A549 (cell line): ENCODE measurements at regions of chr1 and their contacts with region 1.

Region 1: DNA sequence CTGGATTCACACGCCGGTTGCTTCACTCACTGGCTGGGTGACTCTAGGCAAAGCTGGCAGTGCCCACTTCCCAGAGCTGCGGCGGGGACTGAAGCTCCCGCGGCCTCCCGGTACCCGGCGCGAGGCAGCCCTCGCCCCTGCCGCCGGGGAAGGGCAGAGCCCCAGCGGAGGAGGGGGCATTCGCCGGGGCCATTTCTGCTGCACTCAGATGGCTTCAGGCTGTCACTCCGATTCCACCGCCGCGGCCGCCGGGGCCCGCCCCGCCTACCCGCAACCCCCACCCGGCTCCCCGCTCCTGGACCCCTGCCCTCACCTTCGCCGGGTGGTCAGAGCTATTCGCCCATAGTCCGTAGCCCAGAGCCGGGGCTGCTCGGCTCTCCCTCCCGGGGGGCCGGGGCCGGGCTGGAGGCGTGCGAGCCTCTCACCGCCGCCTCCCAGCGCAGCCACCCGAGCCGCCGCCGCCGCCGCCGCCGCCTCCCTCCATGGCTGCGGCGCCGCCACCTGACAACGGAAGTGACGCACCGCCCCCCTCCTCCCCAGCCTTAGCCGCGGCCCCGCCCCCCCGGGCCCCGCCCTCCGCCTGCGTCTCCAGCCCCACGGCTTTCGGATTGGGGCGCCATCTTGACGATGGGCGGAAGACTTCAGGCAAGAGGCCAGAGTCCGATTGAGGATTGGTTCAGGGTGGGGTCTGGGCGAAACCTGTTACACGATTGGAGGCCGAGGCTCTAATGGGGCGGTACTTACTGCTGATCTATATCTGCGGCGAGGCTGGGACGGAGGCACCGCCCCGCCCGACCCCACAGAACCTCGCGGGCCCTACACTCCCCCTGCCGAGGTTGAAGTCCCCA is at the start of gene STK40:
- DNase-seq: peak; percentile 83 to 98
- ATAC-seq: peak; percentile 83 to 94
- H3K4me3 ChIP-seq: peak within 1 kb of the TSS; percentile 72
- H3K27ac ChIP-seq: peak within 1 kb of the TSS; percentile 96 to 100
- H3K4me1 ChIP-seq: peaks cover 28% of the 10 kb centered on the region
- CTCF ChIP-seq: no peak
- EP300 ChIP-seq: no peak
- POLR2A ChIP-seq: peak; percentile 29; the same call in 1 of the 2 replicates
- RAD21 ChIP-seq: no peak
- polyA plus RNA-seq, gene STK40: 8.9 and 10.5 TPM in 2 replicates

Region 2: DNA sequence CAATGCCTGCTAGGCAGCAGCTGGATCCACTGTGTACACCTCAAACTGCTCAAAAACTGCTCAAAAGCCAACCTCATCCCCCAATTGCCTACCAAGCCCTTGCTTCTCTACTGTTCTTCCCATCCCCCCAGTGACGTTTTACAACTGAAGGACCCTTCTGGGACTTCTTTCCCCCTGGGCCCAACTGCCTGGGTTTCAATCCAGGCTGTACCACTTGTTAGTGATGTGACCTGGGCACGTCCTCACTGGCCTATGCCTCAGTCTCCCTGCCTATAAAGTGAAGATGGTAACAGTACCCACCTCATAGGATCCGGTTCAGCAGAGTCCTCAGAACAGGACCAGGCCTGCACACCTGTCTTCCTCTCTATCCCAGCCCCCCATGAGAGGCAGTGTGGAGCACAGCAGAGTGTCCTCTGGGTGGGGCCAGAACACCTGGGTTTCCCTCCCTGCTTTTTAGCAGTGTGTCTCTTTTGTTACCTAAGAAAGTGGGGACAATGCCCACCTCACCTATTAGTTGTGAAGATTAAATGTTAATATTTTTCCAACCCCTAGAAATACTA is 303.6 kb before region 1 on chr1:
- CTCF ChIA-PET with region 1: no interaction called
- POLR2A ChIA-PET with region 1: no interaction called
- DNase-seq: no peak
- ATAC-seq: no peak
- H3K4me3 ChIP-seq: no peak overlapping the region
- H3K27ac ChIP-seq: no peak overlapping the region
- H3K4me1 ChIP-seq: no peaks in the 10 kb centered on the region
- CTCF ChIP-seq: no peak
- EP300 ChIP-seq: no peak
- POLR2A ChIP-seq: no peak
- RAD21 ChIP-seq: no peak

Region 3: GRCh38 chr1:36397378-36398230 is 12.0 kb after region 1 on chr1 and contains the start of gene LSM10:
- CTCF ChIA-PET with region 1: interaction called, 11 read pairs
- POLR2A ChIA-PET with region 1: interaction called, 40 read pairs
- DNase-seq: peak; percentile 68 to 90
- ATAC-seq: peak; percentile 97
- H3K4me3 ChIP-seq: peak within 1 kb of the TSS; percentile 67
- H3K27ac ChIP-seq: peak within 1 kb of the TSS; percentile 88 to 99
- H3K4me1 ChIP-seq: peaks cover 9% of the 10 kb centered on the region; the same call in 1 of the 3 replicates
- CTCF ChIP-seq: no peak
- EP300 ChIP-seq: no peak
- POLR2A ChIP-seq: peak; percentile 68
- RAD21 ChIP-seq: no peak; a peak in 1 of 5 replicates
- polyA plus RNA-seq, gene LSM10: 44.3 and 54.9 TPM in 2 replicates